Activated CD8-positive, alpha-beta T cell treated with anti-CD3 and anti-CD28 coated beads, Interleukin-2, amount 10 ng/mL, durations not matched to agents 7 days and 5 days (primary cell): ENCODE measurements at regions of chr18 and their contacts with region 1.

Region 1: DNA sequence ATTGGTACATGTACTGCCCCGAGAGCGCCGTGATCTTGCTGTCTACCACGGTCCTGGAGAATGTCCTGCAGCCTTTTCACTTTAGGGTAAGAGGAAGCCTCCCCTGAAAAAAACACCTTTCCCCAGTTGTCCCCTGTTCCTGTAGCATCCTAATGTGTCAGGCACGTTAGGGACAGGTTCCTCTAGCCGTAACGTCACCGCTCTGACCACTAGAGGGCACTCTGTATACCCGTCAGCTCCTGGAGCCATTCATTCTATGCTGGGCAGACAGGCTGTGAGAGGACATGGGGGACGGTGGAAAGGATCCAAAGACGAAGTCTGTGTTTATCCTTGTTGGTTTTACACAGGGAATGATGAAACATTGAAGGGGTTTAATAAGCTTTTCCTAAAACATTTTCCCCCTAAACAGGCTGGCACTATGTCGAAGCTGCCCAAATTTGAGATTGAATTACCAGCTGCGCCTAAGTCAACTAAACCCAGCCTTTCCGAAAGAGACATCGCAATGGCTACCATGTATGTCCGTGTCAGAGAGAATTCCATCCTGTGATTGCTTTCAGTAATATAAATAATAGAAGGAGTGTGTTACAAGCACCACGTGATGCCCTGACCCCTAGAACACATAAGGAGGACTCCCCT is 12.7 kb downstream of the RMC1 start:
- DNase-seq: peak; percentile 85
- ATAC-seq: peak; percentile 95
- H3K4me3 Mint-ChIP-seq: no peak overlapping the region
- H3K27ac Mint-ChIP-seq: peak overlapping the region; percentile 45
- H3K4me1 Mint-ChIP-seq: peaks cover 26% of the 10 kb centered on the region
- H3K27me3 Mint-ChIP-seq: no peaks in the 10 kb centered on the region

Region 2: GRCh38 chr18:23401400-23402347 is 114.4 kb before region 1 on chr18:
- CTCF ChIA-PET with region 1: no interaction called
- POLR2A ChIA-PET with region 1: no interaction called
- DNase-seq: no peak
- ATAC-seq: no peak
- H3K4me3 Mint-ChIP-seq: no peak overlapping the region
- H3K27ac Mint-ChIP-seq: no peak overlapping the region
- H3K4me1 Mint-ChIP-seq: peaks cover 15% of the 10 kb centered on the region
- H3K27me3 Mint-ChIP-seq: no peaks in the 10 kb centered on the region

Region 3: DNA sequence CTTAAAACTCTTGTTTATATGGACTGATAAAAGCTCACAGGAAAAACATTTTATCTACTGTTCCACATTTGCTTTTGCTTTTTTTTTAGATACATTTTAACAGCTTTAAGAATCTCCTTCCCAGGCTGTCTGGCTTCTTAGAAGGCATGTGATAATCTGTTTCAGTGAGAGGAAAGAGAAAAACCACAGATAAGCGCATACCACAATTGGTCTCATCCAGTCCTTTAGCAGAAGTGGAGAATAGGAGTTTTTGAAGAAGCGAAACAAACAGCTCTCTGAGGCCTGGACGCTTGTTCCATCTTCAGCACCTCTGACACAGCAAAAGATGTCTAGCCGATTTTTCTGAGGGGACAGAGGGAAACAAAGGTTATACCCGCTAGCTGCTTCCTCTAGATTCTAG is 24.8 kb after region 1 on chr18:
- CTCF ChIA-PET with region 1: interaction called, 26 read pairs
- POLR2A ChIA-PET with region 1: no interaction called
- DNase-seq: peak; percentile 43
- ATAC-seq: peak; percentile 87
- H3K4me3 Mint-ChIP-seq: peak overlapping the region; percentile 54
- H3K27ac Mint-ChIP-seq: peak overlapping the region; percentile 75
- H3K4me1 Mint-ChIP-seq: peaks cover 40% of the 10 kb centered on the region
- H3K27me3 Mint-ChIP-seq: no peaks in the 10 kb centered on the region

Region 4: DNA sequence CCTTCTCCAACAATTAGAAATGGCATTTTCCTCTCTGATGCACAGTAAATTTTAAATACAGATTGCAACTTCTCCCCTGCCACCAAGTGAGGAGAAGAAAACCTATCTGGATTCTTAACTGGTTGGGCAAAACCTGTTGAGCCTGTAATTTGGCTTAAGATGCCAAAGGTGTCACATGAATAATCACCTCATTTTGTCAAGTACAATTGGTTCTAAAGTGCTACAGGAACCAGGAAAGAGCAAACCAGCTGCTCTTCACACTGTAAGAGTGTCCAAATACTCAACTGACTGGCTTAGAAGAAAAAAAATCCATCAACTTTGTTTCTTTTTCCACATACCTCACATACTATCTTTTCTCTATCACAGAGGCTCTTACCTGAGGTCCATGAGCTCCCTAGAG is 34.9 kb after region 1 on chr18:
- CTCF ChIA-PET with region 1: interaction called, 11 read pairs
- POLR2A ChIA-PET with region 1: no interaction called
- DNase-seq: no peak
- ATAC-seq: no peak
- H3K4me3 Mint-ChIP-seq: no peak overlapping the region
- H3K27ac Mint-ChIP-seq: no peak overlapping the region
- H3K4me1 Mint-ChIP-seq: peaks cover 5% of the 10 kb centered on the region
- H3K27me3 Mint-ChIP-seq: no peaks in the 10 kb centered on the region

Region 5: DNA sequence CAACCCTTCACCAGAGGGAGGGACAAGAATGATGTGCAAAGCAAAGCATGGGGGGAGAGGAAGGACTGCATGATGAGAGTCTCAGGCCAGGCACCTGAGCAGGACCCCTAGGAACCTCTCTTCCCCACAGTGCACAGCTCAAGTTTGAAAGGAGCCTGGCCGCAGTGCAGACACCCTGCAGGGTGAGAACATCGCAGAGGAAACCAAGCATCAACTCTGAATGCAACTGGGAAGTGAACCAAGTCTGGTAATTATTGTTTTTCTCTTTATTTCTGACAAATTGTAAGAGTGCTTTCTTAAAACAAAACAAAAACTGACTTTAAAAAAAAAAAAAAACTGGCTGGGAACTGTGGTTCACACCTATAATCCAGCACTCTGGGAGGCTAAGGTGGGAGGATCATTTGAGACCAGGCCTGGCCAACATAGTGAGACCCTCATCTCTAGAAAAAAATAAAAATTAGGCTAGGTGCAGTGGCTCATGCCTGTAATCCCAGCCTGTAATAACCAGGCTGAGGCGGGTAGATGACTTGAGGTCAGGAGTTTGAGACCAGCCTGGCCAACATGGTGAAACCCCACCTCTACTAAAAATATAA is 55.0 kb after region 1 on chr18:
- CTCF ChIA-PET with region 1: interaction called, 10 read pairs
- POLR2A ChIA-PET with region 1: no interaction called
- DNase-seq: no peak
- ATAC-seq: no peak
- H3K4me3 Mint-ChIP-seq: no peak overlapping the region
- H3K27ac Mint-ChIP-seq: no peak overlapping the region
- H3K4me1 Mint-ChIP-seq: peaks cover 31% of the 10 kb centered on the region
- H3K27me3 Mint-ChIP-seq: no peaks in the 10 kb centered on the region

Region 6: DNA sequence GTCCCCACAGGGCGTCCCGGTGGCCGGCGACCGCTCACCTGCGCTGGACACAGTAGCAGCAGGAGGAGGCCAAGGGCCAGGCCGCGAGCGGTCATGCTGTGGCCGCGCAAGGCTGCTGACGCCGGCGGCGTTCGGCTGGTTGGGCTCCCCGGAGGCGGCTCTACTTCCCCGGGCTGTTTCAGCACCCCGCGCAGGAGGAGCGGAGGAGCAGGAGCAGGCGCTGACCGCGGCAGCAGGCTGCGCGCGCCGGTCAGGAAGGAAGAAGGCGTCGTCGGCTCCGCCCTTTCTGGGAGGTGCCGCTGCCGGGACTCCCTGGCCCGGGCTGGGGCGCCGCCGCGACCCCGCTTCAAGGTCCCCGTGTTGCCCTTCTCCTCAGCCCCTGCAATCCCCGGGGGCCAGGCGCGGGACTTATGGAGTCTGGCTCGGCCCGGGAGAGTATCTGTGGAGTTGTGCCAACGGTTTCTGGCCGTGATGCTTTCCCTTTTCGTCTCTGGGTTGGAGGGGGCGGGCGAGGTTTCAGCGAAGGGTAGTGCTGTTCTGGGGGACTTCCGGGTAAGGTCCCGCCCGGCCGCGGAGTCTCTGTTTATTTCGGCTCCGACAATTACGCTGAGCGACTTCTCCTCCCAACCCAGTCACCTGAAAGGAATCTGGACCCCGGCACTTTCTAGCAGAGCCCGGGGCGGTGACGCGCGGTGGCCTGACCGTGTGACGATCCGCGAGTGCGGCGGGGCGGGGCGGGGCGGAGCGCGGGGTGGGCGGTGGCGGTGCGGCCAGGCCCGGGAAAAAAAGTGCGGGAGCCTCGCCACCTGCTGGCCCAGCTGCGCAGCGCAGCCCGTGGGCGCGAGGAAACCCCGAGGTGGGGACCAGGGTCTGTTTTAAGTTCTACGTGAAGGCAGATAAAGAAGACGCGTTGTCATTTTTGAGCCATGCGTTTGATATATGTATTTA is 70.5 kb after region 1 on chr18 and contains the start of gene NPC1:
- CTCF ChIA-PET with region 1: interaction called, 28 read pairs
- POLR2A ChIA-PET with region 1: interaction called, 4 read pairs
- DNase-seq: peak; percentile 94
- ATAC-seq: peak; percentile 92
- H3K4me3 Mint-ChIP-seq: peak within 1 kb of the TSS; percentile 93
- H3K27ac Mint-ChIP-seq: peak within 1 kb of the TSS; percentile 96
- H3K4me1 Mint-ChIP-seq: peaks cover 44% of the 10 kb centered on the region
- H3K27me3 Mint-ChIP-seq: peaks cover 4% of the 10 kb centered on the region
- total RNA-seq, gene NPC1: 34.6 to 35.0 TPM